ENCODE measurements at regions of chr16 and their contacts with region 1.

Region 1: DNA sequence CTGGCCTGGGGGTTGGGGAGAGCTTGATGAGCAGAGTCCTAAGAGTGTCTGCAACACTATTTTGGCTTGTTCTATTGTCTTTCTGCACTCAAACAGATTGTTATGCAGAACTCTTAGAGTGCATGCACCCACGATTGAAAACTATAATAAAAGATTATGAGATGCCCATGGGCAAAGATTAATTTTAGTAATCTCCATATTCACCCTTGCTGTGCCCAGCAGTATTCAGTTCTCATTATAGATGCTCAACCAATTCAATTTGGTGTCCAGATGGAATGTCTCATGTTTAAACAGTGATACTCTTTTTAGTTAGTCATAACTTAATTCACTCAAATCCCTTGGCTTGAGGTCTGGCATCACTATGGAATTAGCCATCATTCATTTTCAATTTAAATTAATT is 952.5 kb downstream of the CDH8 start:
- DNase-seq: no peak
- H3K4me3 ChIP-seq: no peak overlapping the region
- H3K27ac ChIP-seq: no peak overlapping the region
- H3K4me1 ChIP-seq: no peaks in the 10 kb centered on the region
- H3K27me3 ChIP-seq: peaks cover 4% of the 10 kb centered on the region
- CTCF ChIP-seq: no peak

Region 2: DNA sequence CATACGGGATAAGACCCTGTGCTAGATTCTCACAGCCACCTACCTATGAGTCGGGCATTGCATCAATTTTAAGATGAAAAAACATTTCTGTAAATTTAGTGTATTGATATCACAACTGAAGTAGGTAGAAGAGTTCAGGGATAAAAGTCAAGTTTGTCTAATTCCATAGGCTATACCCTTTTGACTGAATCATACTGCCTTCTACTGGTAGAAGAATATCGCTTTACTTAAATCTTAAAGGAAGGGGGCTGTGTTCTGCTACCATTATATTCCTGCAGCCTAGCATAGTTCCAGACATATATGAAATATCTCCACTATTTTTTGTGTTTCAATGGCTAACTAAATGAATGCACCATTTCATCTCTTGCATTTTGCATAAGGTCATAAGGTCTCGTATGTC is 176.1 kb before region 1 on chr16:
- CTCF ChIA-PET with region 1: no interaction called
- POLR2A ChIA-PET with region 1: no interaction called
- intact Hi-C with region 1: no loop called
- DNase-seq: no peak
- H3K4me3 ChIP-seq: no peak overlapping the region
- H3K27ac ChIP-seq: no peak overlapping the region
- H3K4me1 ChIP-seq: no peaks in the 10 kb centered on the region
- H3K27me3 ChIP-seq: no peaks in the 10 kb centered on the region
- CTCF ChIP-seq: peak; percentile 42

Region 3: GRCh38 chr16:61148930-61149329 is 65.2 kb after region 1 on chr16:
- CTCF ChIA-PET with region 1: no interaction called
- POLR2A ChIA-PET with region 1: no interaction called
- intact Hi-C with region 1: loop called (anchors 10 kb)
- DNase-seq: peak; percentile 6
- H3K4me3 ChIP-seq: no peak overlapping the region
- H3K27ac ChIP-seq: no peak overlapping the region
- H3K4me1 ChIP-seq: no peaks in the 10 kb centered on the region
- H3K27me3 ChIP-seq: no peaks in the 10 kb centered on the region
- CTCF ChIP-seq: no peak

Measured in A673 (cell line).